AG04450 (cell line): ENCODE measurements at regions of chr6 and their contacts with region 1.

Region 1: GRCh38 chr6:119129148-119129967 is 50.9 kb upstream of the FAM184A start:
- DNase-seq: peak; percentile 53
- H3K4me3 ChIP-seq: no peak overlapping the region
- H3K27ac ChIP-seq: peak overlapping the region; percentile 65
- H3K27me3 ChIP-seq: no peaks in the 10 kb centered on the region
- CTCF ChIP-seq: peak; percentile 93

Region 2: DNA sequence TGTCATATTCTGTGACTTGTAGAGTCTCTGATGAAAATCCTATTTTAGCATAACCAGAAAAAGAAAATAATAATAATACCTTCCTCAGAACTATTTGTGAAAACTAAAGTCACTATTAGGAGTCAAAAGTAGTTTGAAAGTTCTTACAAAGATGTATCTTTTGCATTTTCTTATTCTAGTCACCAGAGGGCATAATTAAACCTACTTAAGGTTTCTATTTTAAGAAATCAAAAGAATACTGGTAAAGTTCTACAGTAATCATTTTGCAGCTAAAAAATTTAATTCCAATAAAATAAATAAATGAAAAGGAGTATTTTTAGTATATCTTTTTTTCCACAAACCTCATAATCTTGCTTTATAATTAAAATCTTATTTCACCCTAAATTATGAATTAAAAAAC is 166.4 kb before region 1 on chr6:
- CTCF ChIA-PET with region 1: interaction called, 11 read pairs
- POLR2A ChIA-PET with region 1: no interaction called
- DNase-seq: no peak
- H3K4me3 ChIP-seq: no peak overlapping the region
- H3K27ac ChIP-seq: no peak overlapping the region
- H3K27me3 ChIP-seq: no peaks in the 10 kb centered on the region
- CTCF ChIP-seq: peak; percentile 34

Region 3: DNA sequence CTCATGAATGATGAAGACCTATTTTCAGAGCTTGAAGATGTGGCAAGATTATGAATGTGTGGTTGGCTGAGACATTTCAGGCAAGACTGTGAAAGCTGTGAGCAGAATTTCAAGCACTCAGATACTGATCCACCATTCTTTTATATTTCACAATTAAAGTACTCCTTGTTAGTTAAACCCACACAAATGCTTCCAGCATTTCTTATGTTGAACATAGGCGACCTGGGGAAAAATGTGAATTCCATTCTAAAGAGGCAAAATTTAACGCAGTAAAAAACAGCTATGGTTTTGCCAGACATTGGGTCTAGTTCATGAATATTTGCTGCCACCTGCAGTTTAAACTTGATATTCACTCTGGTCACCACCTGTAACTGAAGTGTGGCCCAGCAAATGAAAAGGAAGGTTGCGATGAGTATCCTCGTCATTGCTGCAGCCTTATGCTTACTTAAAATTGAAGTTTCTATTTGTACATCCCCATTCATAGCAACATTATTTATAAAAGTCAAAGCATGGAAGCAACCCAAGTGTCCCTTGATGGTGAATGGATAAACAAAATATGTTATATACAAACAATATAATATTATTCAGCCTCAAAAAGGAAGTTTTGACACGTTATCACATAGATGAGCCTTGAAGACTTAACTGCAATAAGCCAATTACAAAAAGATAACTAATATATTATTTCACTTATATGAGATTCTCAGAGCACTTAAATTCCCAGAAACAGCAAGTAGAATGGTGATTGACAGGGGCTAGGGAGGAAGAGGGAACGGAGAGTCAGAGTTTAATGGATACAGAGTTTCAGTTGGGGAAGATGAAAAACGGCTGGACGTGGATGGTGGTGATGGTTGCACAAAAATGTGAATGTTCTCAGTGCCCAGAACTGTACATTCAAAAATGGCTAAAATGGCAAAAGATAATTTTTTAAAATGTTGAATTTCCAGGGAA is 18.5 kb before region 1 on chr6:
- CTCF ChIA-PET with region 1: interaction called, 16 read pairs
- POLR2A ChIA-PET with region 1: no interaction called
- DNase-seq: no peak
- H3K4me3 ChIP-seq: no peak overlapping the region
- H3K27ac ChIP-seq: no peak overlapping the region
- H3K27me3 ChIP-seq: no peaks in the 10 kb centered on the region
- CTCF ChIP-seq: peak; percentile 58

Region 4: GRCh38 chr6:119116712-119117281 is 12.6 kb before region 1 on chr6:
- CTCF ChIA-PET with region 1: interaction called, 19 read pairs
- POLR2A ChIA-PET with region 1: no interaction called
- DNase-seq: no peak
- H3K4me3 ChIP-seq: no peak overlapping the region
- H3K27ac ChIP-seq: no peak overlapping the region
- H3K27me3 ChIP-seq: no peaks in the 10 kb centered on the region
- CTCF ChIP-seq: peak; percentile 39

Region 5: DNA sequence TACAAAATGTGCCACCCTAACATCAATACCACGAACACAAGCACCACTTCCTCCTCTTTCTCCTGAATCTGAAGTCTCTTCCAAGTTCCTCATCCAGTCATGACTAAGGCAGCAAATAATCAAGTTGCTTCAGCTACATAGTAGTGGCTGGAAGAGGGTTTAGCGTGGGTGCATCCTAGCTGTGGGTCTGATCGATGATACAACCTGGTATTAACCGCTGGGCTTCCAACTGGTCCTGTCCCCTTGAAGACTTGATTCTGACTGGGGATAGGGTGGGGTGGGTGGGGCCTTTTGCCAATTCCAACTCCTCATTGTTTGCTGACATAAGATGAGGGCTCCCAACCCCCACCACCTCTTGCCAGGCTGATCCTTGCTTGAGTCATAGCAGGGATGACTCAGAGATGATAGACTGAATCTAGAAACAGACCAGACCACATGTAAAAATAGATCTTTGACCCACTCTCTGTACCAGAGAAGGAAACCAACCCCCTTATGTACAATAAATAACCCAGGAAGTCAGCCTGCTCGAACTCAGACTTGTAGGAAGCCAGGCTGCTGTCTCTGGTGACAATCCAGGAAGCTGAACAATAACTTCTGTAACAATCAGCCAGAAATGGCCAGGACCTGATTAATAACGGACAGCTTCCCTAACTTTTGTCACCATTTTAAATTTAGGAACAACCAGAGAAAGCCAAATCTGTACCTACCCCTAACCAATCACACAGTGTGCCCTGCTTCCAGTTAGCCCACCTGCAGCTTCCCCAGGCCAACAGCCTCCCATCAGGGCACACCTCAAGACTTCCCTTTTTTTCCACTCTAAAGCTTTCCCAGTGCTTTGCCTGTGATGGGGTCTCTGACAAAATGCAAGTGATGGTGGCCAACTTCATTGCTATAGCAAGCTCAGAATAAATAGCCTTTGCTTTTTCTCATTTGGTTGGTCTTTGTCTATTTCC is 18.0 kb after region 1 on chr6:
- CTCF ChIA-PET with region 1: interaction called, 47 read pairs
- POLR2A ChIA-PET with region 1: interaction called, 8 read pairs
- DNase-seq: peak; percentile 92
- H3K4me3 ChIP-seq: peak overlapping the region; percentile 25; the same call in 1 of the 2 replicates
- H3K27ac ChIP-seq: peak overlapping the region; percentile 73
- H3K27me3 ChIP-seq: no peaks in the 10 kb centered on the region
- CTCF ChIP-seq: no peak

Region 6: GRCh38 chr6:119162134-119162775 is 32.9 kb after region 1 on chr6:
- CTCF ChIA-PET with region 1: interaction called, 15 read pairs
- POLR2A ChIA-PET with region 1: no interaction called
- DNase-seq: no peak
- H3K4me3 ChIP-seq: no peak overlapping the region
- H3K27ac ChIP-seq: no peak overlapping the region
- H3K27me3 ChIP-seq: peaks cover 4% of the 10 kb centered on the region
- CTCF ChIP-seq: no peak

Region 7: GRCh38 chr6:119284861-119285521 is 155.6 kb after region 1 on chr6:
- CTCF ChIA-PET with region 1: no interaction called
- POLR2A ChIA-PET with region 1: no interaction called
- DNase-seq: no peak
- H3K4me3 ChIP-seq: no peak overlapping the region
- H3K27ac ChIP-seq: no peak overlapping the region
- H3K27me3 ChIP-seq: no peaks in the 10 kb centered on the region
- CTCF ChIP-seq: no peak

Region 8: GRCh38 chr6:119349323-119350042 is 220.1 kb after region 1 on chr6 and contains the start of gene MAN1A1:
- CTCF ChIA-PET with region 1: interaction called, 16 read pairs
- POLR2A ChIA-PET with region 1: no interaction called
- DNase-seq: peak; percentile 15
- H3K4me3 ChIP-seq: peak within 1 kb of the TSS; percentile 86
- H3K27ac ChIP-seq: peak within 1 kb of the TSS; percentile 25
- H3K27me3 ChIP-seq: no peaks in the 10 kb centered on the region
- CTCF ChIP-seq: no peak
- polyA plus RNA-seq, gene MAN1A1: 18.7 and 27.5 TPM in 2 replicates